WTC11 (cell line): ENCODE measurements at regions of chr19 and their contacts with region 1.

Region 1: DNA sequence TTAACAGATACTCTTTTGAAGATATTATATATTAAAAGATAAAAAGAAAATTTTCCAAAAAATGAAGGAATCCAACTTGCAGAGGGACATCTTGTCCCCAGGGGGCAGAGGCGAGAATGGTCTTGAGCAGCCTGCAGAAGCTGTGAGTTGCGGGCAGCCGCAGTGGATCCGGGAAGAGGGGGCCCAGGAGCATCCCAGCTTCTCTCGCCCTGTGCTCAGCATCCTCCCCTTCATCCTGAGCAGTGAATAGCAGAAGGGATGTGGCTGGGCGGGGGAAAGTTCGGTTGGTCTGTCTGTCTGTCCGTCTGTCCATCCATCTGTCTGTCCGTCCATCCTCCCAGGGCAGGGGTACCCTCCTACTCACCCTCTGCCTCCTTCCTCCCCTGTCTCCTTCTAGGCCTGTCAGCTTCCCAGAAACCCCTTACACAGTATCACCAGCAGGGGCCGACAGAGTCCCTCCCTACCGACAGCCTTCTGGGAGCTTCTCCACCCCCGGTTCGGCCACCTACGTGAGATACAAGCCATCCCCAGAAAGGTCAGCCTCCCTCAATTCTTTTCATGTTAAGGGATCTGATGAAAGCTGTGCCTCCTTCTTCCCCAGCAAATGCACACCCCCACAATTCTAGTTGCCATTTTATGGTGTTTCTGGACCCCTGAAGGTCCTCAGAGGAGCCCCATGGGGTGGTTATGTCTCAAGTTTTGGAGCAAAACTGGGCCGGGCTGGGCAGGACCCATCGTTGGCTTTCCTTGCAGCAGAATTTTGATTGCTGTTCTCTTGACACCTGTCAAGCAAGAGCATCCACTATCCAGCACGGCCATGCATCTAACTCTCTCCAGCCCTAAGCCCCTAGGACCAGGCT is 81.6 kb downstream of the DPF1 start:
- DNase-seq: peak; percentile 87
- ATAC-seq: peak; percentile 95
- H3K4me3 Mint-ChIP-seq: no peak overlapping the region
- H3K27ac Mint-ChIP-seq: no peak overlapping the region
- H3K4me1 Mint-ChIP-seq: no peaks in the 10 kb centered on the region
- H3K27me3 Mint-ChIP-seq: no peaks in the 10 kb centered on the region
- CTCF ChIP-seq: peak; percentile 52

Region 2: DNA sequence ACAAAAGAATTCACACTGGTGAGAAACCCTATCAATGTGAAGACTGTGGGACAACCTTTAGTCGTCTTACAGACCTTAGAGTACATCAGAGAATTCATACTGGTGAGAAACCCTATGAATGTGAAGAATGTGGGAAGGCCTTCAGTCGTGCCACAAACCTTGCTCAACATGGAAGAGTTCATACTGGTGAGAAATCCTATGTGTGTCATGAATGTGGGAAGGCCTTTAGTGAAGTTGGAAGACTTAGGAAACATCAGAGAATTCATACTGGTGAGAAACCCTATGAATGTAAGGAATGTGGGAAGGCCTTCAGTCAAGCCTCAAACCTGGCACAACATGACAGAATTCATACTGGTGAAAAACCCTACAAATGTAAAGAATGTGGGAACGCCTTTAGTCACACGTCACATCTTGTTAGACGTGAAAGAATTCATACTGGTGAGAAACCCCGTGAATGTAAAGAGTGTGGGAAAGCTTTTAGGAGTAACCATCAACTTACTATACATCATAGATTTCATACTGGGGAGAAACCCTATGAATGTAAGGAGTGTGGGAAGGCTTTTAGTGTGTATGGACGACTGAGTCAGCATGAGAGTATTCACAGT is 339.1 kb before region 1 on chr19:
- CTCF ChIA-PET with region 1: no interaction called
- POLR2A ChIA-PET with region 1: no interaction called
- DNase-seq: no peak
- ATAC-seq: no peak
- H3K4me3 Mint-ChIP-seq: no peak overlapping the region
- H3K27ac Mint-ChIP-seq: no peak overlapping the region
- H3K4me1 Mint-ChIP-seq: no peaks in the 10 kb centered on the region
- H3K27me3 Mint-ChIP-seq: peaks cover 18% of the 10 kb centered on the region
- CTCF ChIP-seq: no peak

Region 3: DNA sequence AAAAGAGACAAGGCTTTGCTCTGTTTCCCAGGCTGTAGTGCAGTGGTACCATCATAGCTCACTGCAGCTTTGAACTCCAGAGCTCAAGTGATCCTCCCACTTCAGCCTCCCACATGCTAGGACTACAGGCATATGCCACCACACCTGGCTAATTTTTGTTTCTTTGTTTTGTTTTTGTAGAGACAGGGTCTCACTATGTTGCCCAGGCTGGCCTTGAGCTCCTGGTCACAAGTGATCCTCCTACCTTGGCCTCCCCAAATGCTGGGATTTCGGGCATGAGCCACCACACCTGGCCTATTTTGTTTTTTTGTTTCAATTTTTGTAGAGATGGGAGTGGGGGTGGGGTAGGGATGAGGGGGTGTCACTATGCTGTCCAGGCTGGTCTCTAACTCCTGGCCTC is 243.0 kb before region 1 on chr19:
- CTCF ChIA-PET with region 1: interaction called, 75 read pairs
- POLR2A ChIA-PET with region 1: no interaction called
- DNase-seq: no peak
- ATAC-seq: no peak
- H3K4me3 Mint-ChIP-seq: no peak overlapping the region
- H3K27ac Mint-ChIP-seq: no peak overlapping the region
- H3K4me1 Mint-ChIP-seq: peaks cover 3% of the 10 kb centered on the region
- H3K27me3 Mint-ChIP-seq: no peaks in the 10 kb centered on the region
- CTCF ChIP-seq: no peak

Region 4: DNA sequence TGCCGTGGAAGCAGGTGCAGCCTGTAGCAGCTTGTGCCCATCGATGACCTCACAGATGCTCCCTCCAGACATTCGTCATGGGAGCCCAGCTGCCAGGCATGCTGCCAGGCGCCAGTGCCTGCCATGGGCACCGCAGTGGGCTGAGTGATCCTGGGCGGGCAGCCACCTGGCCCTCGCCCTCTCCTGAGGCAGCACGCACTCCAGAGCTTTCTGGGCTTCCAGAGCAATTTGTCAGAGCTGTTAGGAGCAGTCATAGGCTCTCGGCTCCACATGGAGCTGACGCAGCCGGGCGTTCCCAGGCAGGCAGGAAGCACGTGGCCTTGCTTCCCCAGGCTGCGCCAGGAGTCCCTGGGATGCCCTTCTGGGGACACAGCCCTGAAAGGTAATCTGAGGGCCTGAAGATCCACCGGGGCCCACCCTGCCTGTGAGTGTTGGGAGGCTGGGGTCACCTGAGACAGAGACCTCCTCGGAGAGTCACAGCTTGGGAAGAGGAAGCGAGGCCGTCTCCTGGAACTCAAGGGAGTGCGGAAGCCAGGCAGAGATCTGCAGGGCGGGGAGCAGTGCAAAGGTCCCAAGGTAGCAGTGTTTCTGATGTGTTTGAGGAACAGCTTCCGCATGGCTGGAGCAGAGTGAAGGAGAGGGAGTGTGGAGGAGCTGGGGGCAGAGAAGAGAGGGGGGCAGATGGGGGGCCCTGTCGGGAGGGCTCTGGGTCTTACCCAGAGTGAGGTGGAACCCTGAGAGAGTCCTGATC is 31.1 kb after region 1 on chr19:
- CTCF ChIA-PET with region 1: interaction called, 20 read pairs
- POLR2A ChIA-PET with region 1: interaction called, 5 read pairs
- DNase-seq: no peak
- ATAC-seq: no peak
- H3K4me3 Mint-ChIP-seq: no peak overlapping the region
- H3K27ac Mint-ChIP-seq: peak overlapping the region; percentile 75
- H3K4me1 Mint-ChIP-seq: peaks cover 22% of the 10 kb centered on the region
- H3K27me3 Mint-ChIP-seq: no peaks in the 10 kb centered on the region
- CTCF ChIP-seq: no peak

Region 5: GRCh38 chr19:38194056-38194701 is 51.8 kb after region 1 on chr19:
- CTCF ChIA-PET with region 1: interaction called, 17 read pairs
- POLR2A ChIA-PET with region 1: no interaction called
- DNase-seq: no peak
- ATAC-seq: no peak
- H3K4me3 Mint-ChIP-seq: no peak overlapping the region
- H3K27ac Mint-ChIP-seq: no peak overlapping the region
- H3K4me1 Mint-ChIP-seq: no peaks in the 10 kb centered on the region
- H3K27me3 Mint-ChIP-seq: no peaks in the 10 kb centered on the region
- CTCF ChIP-seq: no peak

Region 6: GRCh38 chr19:38209671-38210457 is 67.5 kb after region 1 on chr19:
- CTCF ChIA-PET with region 1: interaction called, 88 read pairs
- POLR2A ChIA-PET with region 1: interaction called, 4 read pairs
- DNase-seq: peak; percentile 65
- ATAC-seq: peak; percentile 26
- H3K4me3 Mint-ChIP-seq: peak overlapping the region; percentile 70
- H3K27ac Mint-ChIP-seq: no peak overlapping the region
- H3K4me1 Mint-ChIP-seq: peaks cover 32% of the 10 kb centered on the region
- H3K27me3 Mint-ChIP-seq: peaks cover 17% of the 10 kb centered on the region
- CTCF ChIP-seq: no peak

Region 7: DNA sequence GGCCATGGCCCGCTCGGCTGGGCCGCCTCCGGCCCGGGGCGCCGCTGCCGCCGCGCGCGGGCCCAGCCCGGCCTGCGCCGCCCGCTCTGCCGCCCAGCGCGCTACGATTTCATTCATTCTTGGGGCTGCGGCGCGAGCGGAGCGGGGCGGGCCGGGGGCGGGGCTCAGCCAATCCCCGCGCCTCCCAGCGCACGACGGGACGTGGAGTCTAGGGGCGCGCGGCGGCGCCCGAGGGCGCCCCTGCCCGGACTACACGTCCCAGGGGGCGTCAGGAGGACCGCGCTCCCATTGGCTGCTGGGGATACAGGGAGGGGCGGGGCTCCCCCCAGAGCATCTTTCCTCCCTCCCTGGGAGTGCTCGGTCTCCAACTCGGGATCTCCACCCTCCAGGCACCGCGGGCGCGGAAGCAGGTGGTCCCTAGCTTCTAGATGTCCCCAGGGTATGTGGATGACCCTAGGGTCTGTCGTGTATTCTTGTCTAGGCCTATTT is 87.2 kb after region 1 on chr19:
- CTCF ChIA-PET with region 1: interaction called, 30 read pairs
- POLR2A ChIA-PET with region 1: no interaction called
- DNase-seq: peak; percentile 79
- ATAC-seq: peak; percentile 35
- H3K4me3 Mint-ChIP-seq: peak overlapping the region; percentile 58
- H3K27ac Mint-ChIP-seq: no peak overlapping the region
- H3K4me1 Mint-ChIP-seq: peaks cover 20% of the 10 kb centered on the region
- H3K27me3 Mint-ChIP-seq: peaks cover 40% of the 10 kb centered on the region
- CTCF ChIP-seq: no peak

Region 8: DNA sequence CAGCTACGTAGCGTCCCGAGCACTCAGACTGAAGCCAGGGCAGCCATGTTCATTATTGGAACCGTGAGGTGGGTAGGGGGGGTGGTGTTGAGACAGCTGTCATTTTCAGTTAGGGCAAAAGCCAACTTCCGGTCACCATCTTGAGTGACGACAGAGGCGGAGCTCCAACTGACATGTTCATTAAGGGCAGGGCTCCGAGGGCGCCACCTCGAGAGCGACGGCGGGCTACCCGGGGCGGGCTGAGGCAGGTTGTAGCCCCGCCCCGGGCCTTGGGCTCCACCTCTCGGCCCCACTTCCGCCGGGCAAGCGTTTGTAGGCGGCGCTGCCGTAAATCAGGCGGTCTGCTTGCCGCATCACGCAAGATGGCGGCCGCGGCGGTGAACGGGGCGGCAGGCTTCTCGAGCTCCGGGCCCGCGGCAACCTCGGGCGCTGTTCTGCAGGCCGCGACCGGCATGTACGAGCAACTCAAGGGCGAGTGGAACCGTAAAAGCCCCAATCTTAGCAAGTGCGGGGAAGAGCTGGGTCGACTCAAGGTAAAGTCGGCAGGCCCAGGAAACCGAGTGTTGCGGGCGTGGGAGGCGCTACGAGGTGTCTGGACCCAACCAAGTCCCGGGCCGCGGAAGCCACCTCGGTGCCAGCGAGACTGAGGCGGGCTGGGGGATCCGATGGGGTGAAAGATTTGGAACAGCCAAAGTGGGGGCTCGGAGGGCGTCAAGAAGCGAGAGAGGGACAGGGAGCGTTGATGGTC is 232.2 kb after region 1 on chr19 and contains the start of gene PSMD8:
- CTCF ChIA-PET with region 1: interaction called, 11 read pairs
- POLR2A ChIA-PET with region 1: no interaction called
- DNase-seq: peak; percentile 99
- ATAC-seq: peak; percentile 99
- H3K4me3 Mint-ChIP-seq: peak within 1 kb of the TSS; percentile 100
- H3K27ac Mint-ChIP-seq: peak within 1 kb of the TSS; percentile 75
- H3K4me1 Mint-ChIP-seq: peaks cover 14% of the 10 kb centered on the region
- H3K27me3 Mint-ChIP-seq: peaks cover 25% of the 10 kb centered on the region
- CTCF ChIP-seq: no peak
- total RNA-seq, gene PSMD8: 156 to 167 TPM (median 160 TPM) in 3 replicates